ENCODE measurements at regions of chr9 and their contacts with region 1.

Region 1: GRCh38 chr9:136545966-136546698 is at the start of gene NOTCH1:
- DNase-seq: peak; percentile 95
- ATAC-seq: peak; percentile 75
- H3K4me3 Mint-ChIP-seq: peak within 1 kb of the TSS; percentile 92
- H3K27ac Mint-ChIP-seq: peak within 1 kb of the TSS; percentile 88
- H3K4me1 Mint-ChIP-seq: peaks cover 34% of the 10 kb centered on the region
- H3K27me3 Mint-ChIP-seq: no peaks in the 10 kb centered on the region
- total RNA-seq, gene NOTCH1: 70.0 to 79.4 TPM

Region 2: DNA sequence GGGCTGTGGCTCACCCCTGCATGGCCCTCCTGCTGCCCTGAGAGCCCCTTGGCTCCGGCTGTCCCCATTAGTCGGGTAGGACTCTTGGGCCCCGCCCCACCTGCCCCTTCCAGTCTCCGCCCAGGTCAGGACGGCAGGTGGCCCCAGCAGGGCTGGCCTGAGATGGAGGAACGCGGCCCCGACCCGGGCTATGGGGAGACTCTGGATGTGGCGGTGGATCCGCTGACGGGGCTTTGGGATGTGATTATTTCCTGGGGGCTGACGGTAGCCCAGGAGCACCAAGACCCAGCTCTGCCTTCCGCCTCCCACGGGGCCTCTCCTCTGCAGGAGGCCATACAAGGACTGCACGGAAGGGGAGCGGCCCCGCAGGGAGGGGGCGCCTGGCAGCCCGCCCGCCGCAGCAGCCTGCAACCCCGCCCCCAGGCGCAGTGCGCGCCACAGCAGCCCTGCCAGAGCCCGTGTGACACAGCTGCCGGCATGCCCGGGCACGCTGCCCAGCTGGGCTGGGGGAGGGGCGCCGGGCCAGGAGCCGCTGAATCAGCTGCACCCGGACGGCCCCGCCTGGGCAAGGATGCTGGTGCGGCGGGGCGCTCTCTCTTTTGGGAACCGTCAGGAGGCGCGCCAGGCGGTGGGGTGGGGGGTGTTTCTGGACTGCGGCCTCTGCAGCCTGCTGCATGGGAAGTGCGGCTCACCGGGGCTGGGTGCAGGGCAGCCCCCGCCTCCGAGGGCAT is 436.6 kb before region 1 on chr9:
- CTCF ChIA-PET with region 1: no interaction called
- POLR2A ChIA-PET with region 1: no interaction called
- intact Hi-C with region 1: loop called in 1 of 2 experiments (anchors 1 kb)
- DNase-seq: peak; percentile 97
- ATAC-seq: peak; percentile 88
- H3K4me3 Mint-ChIP-seq: peak overlapping the region; percentile 78
- H3K27ac Mint-ChIP-seq: peak overlapping the region; percentile 97
- H3K4me1 Mint-ChIP-seq: peaks cover 71% of the 10 kb centered on the region
- H3K27me3 Mint-ChIP-seq: no peaks in the 10 kb centered on the region

Region 3: DNA sequence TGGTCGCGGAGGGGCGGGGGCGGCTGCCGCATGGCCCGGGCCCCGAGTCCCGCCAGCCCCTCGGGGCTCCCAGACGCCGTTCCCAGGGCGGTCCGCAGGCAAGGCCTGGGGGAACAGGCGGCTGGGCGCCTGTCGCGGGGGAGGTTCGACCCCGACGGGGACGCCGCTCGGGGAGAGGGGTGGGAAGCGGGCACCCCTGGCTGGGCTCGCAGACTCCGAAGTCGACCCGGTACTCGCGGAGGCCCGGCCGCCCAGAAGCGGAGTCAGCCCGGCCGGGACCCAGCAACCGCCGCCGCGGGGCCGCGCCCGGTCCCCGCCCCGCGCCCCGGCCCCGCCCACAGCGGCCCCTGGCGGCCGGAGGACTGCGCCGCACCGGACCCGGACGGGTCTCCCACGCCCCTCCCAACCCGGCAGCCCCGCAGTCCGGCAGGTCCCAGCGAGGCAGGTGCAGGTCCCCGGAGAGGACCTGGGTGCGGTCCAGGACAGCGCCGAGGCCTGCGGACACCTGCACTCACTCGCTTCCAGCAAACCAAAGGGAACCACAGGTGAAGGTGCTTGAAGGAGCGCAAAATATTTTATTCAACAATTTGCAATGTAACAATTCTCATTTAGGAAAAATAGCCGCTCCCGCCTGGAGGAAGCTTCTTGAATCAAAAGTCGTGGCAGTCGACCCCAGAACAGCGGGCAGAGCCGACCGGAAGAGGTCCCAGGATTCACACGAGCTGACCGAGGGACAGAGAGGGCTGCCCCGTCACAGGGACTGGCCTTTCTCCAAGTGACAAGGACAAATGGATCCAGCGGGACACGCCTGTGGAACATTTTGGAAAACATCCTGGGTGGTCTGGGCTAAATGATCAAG is 106.4 kb before region 1 on chr9 and contains the start of gene INPP5E:
- CTCF ChIA-PET with region 1: no interaction called
- POLR2A ChIA-PET with region 1: no interaction called
- intact Hi-C with region 1: loop called in 1 of 2 experiments (anchors 1 kb)
- DNase-seq: peak; percentile 89
- ATAC-seq: peak; percentile 85
- H3K4me3 Mint-ChIP-seq: peak within 1 kb of the TSS; percentile 80
- H3K27ac Mint-ChIP-seq: no peak within 1 kb of the TSS
- H3K4me1 Mint-ChIP-seq: peaks cover 21% of the 10 kb centered on the region
- H3K27me3 Mint-ChIP-seq: no peaks in the 10 kb centered on the region
- total RNA-seq, gene INPP5E: 13.5 to 14.1 TPM

Region 4: DNA sequence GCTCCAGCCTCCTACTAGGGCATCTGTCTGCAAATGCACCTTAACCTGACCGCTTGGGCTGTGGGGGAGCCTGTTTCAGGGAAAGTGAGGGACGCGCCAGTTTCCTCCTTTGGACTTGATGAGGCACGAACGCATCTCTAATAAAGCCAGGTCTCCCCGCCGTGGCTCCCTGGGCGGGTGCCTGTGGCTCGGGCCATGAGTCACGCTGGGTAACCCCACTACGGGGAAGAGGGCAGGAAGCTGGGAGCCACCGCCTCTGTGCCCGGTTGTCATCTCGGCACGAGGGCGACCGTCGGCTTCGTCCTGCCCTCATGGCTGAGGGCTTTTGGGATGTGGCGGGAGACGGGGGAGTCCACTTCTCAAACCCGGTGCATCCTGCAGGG is 12.4 kb before region 1 on chr9:
- CTCF ChIA-PET with region 1: interaction called, 14 read pairs
- POLR2A ChIA-PET with region 1: interaction called, 3 read pairs
- intact Hi-C with region 1: loop called (anchors 1 to 2 kb)
- DNase-seq: peak; percentile 91
- ATAC-seq: peak; percentile 69
- H3K4me3 Mint-ChIP-seq: peak overlapping the region; percentile 59
- H3K27ac Mint-ChIP-seq: peak overlapping the region; percentile 82
- H3K4me1 Mint-ChIP-seq: peaks cover 60% of the 10 kb centered on the region
- H3K27me3 Mint-ChIP-seq: no peaks in the 10 kb centered on the region

Region 5: GRCh38 chr9:136807281-136808074 is 261.3 kb after region 1 on chr9 and contains the start of gene RABL6:
- CTCF ChIA-PET with region 1: no interaction called
- POLR2A ChIA-PET with region 1: no interaction called
- intact Hi-C with region 1: loop called in 1 of 2 experiments (anchors 1 kb)
- DNase-seq: peak; percentile 86
- ATAC-seq: peak; percentile 88
- H3K4me3 Mint-ChIP-seq: peak within 1 kb of the TSS; percentile 81
- H3K27ac Mint-ChIP-seq: peak within 1 kb of the TSS; percentile 88
- H3K4me1 Mint-ChIP-seq: peaks cover 33% of the 10 kb centered on the region
- H3K27me3 Mint-ChIP-seq: no peaks in the 10 kb centered on the region
- total RNA-seq, gene RABL6: 66.2 to 71.8 TPM

Measured in activated CD4-positive, alpha-beta T cell treated with anti-CD3 and anti-CD28 coated beads for 36 hours (primary cell).